ENCODE measurements at regions of chr18 and their contacts with region 1.

Region 1: DNA sequence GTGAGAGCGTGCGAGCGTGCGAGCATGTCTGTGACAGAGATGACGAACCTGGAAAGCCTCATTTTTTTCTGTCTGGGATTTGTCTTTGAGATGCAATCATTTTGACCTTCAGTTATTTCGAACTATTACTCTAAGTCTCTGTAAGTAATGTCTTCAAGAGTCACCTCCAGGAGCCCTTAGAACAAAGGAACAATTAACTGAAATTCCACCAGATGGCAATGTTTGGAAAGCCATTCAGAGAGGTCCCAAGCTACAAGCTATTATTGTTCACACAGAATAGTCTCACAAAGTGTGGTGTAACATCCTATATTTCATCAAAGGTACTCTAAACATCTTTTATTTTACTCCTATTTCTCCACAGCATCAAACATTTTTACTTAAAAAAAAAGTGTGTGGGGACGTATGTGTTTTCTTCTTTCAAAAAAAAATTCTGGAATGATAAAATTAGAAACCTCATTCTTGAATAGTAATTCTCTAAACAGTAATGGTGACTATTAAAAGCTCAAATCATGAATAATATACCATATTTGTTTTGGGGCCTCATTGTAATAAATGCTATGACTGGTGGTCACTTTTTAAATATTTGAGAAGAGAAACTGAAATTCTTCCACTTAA is 35.1 kb upstream of the MAPRE2 start:
- DNase-seq: peak; percentile 74
- ATAC-seq: peak; percentile 63
- H3K4me3 ChIP-seq: no peak overlapping the region
- H3K4me3 Mint-ChIP-seq: no peak overlapping the region
- H3K27ac ChIP-seq: no peak overlapping the region
- H3K27ac Mint-ChIP-seq: no peak overlapping the region
- H3K4me1 ChIP-seq: no peaks in the 10 kb centered on the region
- H3K4me1 Mint-ChIP-seq: no peaks in the 10 kb centered on the region
- H3K27me3 ChIP-seq: no peaks in the 10 kb centered on the region
- H3K27me3 Mint-ChIP-seq: peaks cover 4% of the 10 kb centered on the region
- CTCF ChIP-seq: peak; percentile 77

Region 2: DNA sequence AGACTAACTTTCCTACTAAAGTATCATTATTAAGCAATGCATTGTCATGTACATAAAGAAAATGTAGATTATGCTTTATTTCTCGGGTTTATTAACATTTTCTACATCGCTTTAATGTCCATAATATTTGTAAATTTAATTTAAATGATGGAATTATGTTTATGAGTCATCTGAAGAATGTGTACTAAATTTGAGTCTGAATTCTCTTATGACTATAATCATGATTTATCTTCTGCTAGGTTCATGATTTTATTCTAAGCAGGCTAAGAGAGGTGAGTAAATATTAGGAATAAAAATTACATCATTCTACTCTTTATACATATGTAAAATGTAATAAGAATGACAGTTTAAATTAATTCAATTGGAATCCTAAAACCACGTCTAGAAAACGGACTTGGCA is 575.0 kb before region 1 on chr18:
- CTCF ChIA-PET with region 1: no interaction called
- POLR2A ChIA-PET with region 1: no interaction called
- intact Hi-C with region 1: no loop called
- DNase-seq: no peak
- ATAC-seq: no peak
- H3K4me3 ChIP-seq: no peak overlapping the region
- H3K4me3 Mint-ChIP-seq: no peak overlapping the region
- H3K27ac ChIP-seq: no peak overlapping the region
- H3K27ac Mint-ChIP-seq: no peak overlapping the region
- H3K4me1 ChIP-seq: no peaks in the 10 kb centered on the region
- H3K4me1 Mint-ChIP-seq: no peaks in the 10 kb centered on the region
- H3K27me3 ChIP-seq: no peaks in the 10 kb centered on the region
- H3K27me3 Mint-ChIP-seq: no peaks in the 10 kb centered on the region
- CTCF ChIP-seq: no peak

Region 3: GRCh38 chr18:34821749-34822148 is 184.3 kb before region 1 on chr18:
- CTCF ChIA-PET with region 1: no interaction called
- POLR2A ChIA-PET with region 1: no interaction called
- intact Hi-C with region 1: no loop called
- DNase-seq: no peak
- ATAC-seq: no peak
- H3K4me3 ChIP-seq: no peak overlapping the region
- H3K4me3 Mint-ChIP-seq: no peak overlapping the region
- H3K27ac ChIP-seq: no peak overlapping the region
- H3K27ac Mint-ChIP-seq: no peak overlapping the region
- H3K4me1 ChIP-seq: no peaks in the 10 kb centered on the region
- H3K4me1 Mint-ChIP-seq: no peaks in the 10 kb centered on the region
- H3K27me3 ChIP-seq: no peaks in the 10 kb centered on the region
- H3K27me3 Mint-ChIP-seq: peaks cover 7% of the 10 kb centered on the region
- CTCF ChIP-seq: no peak

Region 4: GRCh38 chr18:34993289-34993688 is 12.8 kb before region 1 on chr18:
- CTCF ChIA-PET with region 1: interaction called, 14 read pairs
- POLR2A ChIA-PET with region 1: no interaction called
- intact Hi-C with region 1: no loop called
- DNase-seq: no peak
- ATAC-seq: no peak
- H3K4me3 ChIP-seq: no peak overlapping the region
- H3K4me3 Mint-ChIP-seq: no peak overlapping the region
- H3K27ac ChIP-seq: no peak overlapping the region
- H3K27ac Mint-ChIP-seq: no peak overlapping the region
- H3K4me1 ChIP-seq: no peaks in the 10 kb centered on the region
- H3K4me1 Mint-ChIP-seq: no peaks in the 10 kb centered on the region
- H3K27me3 ChIP-seq: peaks cover 0 to 3% (median 0%) of the 10 kb centered on the region in 4 experiments
- H3K27me3 Mint-ChIP-seq: peaks cover 19% of the 10 kb centered on the region
- CTCF ChIP-seq: no peak

Region 5: DNA sequence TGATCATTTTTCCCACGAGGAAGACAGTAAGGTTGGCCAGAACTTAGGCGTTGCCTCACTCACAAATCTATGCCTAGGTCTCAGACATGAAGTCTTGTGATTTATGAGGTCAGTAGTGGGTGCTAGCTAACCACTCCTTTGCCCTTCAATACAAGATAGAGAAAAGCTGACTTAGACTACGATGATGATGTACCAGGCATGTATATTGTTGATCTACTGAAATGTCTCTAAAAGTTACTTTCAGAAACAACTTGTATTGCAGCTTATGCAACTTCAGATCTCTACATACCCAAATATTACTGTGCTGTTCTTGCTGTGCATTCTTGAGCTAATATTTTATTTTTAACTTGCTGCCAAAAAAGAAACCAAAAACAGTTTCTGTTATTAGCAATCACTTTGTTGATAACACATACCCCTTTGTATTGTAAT is 65.8 kb after region 1 on chr18:
- CTCF ChIA-PET with region 1: interaction called, 7 read pairs
- POLR2A ChIA-PET with region 1: no interaction called
- intact Hi-C with region 1: loop called (anchors 1 kb)
- DNase-seq: no peak
- ATAC-seq: no peak
- H3K4me3 ChIP-seq: no peak overlapping the region
- H3K4me3 Mint-ChIP-seq: no peak overlapping the region
- H3K27ac ChIP-seq: peak overlapping the region in 1 of 2 donors; percentile 65
- H3K27ac Mint-ChIP-seq: peak overlapping the region; percentile 42
- H3K4me1 ChIP-seq: peaks cover 10 to 17% of the 10 kb centered on the region in 2 donors
- H3K4me1 Mint-ChIP-seq: peaks cover 53% of the 10 kb centered on the region
- H3K27me3 ChIP-seq: no peaks in the 10 kb centered on the region
- H3K27me3 Mint-ChIP-seq: no peaks in the 10 kb centered on the region
- CTCF ChIP-seq: no peak

Region 6: DNA sequence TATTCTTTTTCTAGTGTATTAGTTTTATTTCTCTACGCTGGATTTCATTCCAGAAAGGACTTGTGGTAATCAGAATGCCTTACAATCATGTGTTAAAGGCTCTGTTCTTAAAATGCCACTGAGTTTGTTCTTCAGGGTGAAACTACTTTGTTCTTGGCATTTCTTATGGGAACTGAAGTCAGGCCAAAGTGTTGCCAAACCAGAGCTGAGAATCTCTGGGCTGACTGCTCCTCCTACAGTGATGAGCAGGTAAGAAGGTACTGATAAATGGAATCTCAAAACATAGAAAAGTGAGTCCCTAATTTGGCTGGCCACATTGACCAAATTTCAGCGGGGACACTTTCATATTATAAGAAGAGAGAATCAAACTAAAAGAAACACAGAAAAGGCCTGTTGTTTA is 179.7 kb after region 1 on chr18:
- CTCF ChIA-PET with region 1: interaction called, 6 read pairs
- POLR2A ChIA-PET with region 1: no interaction called
- intact Hi-C with region 1: loop called (anchors 1 kb)
- DNase-seq: no peak
- ATAC-seq: no peak
- H3K4me3 ChIP-seq: no peak overlapping the region
- H3K4me3 Mint-ChIP-seq: no peak overlapping the region
- H3K27ac ChIP-seq: no peak overlapping the region
- H3K27ac Mint-ChIP-seq: no peak overlapping the region
- H3K4me1 ChIP-seq: peaks cover 0 to 9% of the 10 kb centered on the region in 2 donors
- H3K4me1 Mint-ChIP-seq: peaks cover 14% of the 10 kb centered on the region
- H3K27me3 ChIP-seq: no peaks in the 10 kb centered on the region
- H3K27me3 Mint-ChIP-seq: no peaks in the 10 kb centered on the region
- CTCF ChIP-seq: no peak

Region 7: GRCh38 chr18:35355140-35355618 is 349.1 kb after region 1 on chr18:
- CTCF ChIA-PET with region 1: interaction called, 15 read pairs
- POLR2A ChIA-PET with region 1: no interaction called
- intact Hi-C with region 1: loop called (anchors 1 kb)
- DNase-seq: peak; percentile 85
- ATAC-seq: peak; percentile 99
- H3K4me3 ChIP-seq: no peak overlapping the region
- H3K4me3 Mint-ChIP-seq: no peak overlapping the region
- H3K27ac ChIP-seq: no peak overlapping the region
- H3K27ac Mint-ChIP-seq: no peak overlapping the region
- H3K4me1 ChIP-seq: no peaks in the 10 kb centered on the region
- H3K4me1 Mint-ChIP-seq: no peaks in the 10 kb centered on the region
- H3K27me3 ChIP-seq: no peaks in the 10 kb centered on the region
- H3K27me3 Mint-ChIP-seq: no peaks in the 10 kb centered on the region
- CTCF ChIP-seq: peak; percentile 76